ENCODE measurements at regions of chr9 and their contacts with region 1.

Region 1: GRCh38 chr9:38707885-38708637 is 11.9 kb downstream of the FAM240B start:
- DNase-seq: no peak
- H3K4me3 ChIP-seq: no peak overlapping the region
- H3K27ac ChIP-seq: no peak overlapping the region
- H3K4me1 ChIP-seq: no peaks in the 10 kb centered on the region
- H3K27me3 ChIP-seq: no peaks in the 10 kb centered on the region
- CTCF ChIP-seq: no peak
- POLR2A ChIP-seq: no peak

Region 2: GRCh38 chr9:36913393-36914211 is 1794.5 kb before region 1 on chr9:
- intact Hi-C with region 1: loop called (anchors 10 kb)
- DNase-seq: no peak
- H3K4me3 ChIP-seq: no peak overlapping the region
- H3K27ac ChIP-seq: no peak overlapping the region
- H3K4me1 ChIP-seq: no peaks in the 10 kb centered on the region
- H3K27me3 ChIP-seq: peaks cover 0 to 11% of the 10 kb centered on the region in 2 donors
- CTCF ChIP-seq: no peak
- POLR2A ChIP-seq: no peak

Region 3: DNA sequence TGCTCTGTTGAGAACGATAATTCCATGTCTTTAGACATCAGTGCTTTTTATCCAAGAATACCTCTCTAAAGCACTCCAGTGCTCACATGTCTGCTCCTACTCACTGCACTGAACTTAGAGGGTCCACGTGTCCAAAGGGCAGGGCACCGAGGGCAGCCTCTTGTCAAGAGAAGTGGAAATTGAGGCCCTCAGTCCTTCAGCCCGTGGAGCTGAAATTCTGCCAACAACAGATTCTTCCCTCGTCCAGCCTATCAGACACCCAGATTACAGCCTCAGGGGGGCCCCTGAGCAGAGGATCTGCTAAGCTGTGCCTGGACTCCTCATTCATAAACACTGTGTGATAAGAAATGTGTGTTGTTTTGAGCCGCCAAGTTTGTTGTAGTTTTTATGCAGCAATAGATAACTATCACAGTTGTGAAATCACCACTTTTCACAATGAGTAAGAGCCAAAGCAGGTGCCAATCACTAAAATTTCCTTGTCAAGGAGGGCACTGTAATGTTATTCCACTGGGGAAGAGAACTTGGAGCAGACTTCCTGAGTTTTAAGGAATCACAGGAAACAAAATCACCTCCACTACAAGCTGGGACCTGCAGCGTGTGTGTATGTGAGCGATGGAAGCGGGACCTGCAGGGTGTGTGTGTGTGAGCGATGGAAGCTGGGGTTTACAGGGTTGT is 225.0 kb before region 1 on chr9:
- intact Hi-C with region 1: no loop called
- DNase-seq: no peak
- H3K4me3 ChIP-seq: no peak overlapping the region
- H3K27ac ChIP-seq: no peak overlapping the region
- H3K4me1 ChIP-seq: no peaks in the 10 kb centered on the region
- H3K27me3 ChIP-seq: no peaks in the 10 kb centered on the region
- CTCF ChIP-seq: no peak
- POLR2A ChIP-seq: no peak